Left ventricle myocardium superior (tissue), 1 donor: ENCODE measurements at regions of chr4 and their contacts with region 1.

Region 1: DNA sequence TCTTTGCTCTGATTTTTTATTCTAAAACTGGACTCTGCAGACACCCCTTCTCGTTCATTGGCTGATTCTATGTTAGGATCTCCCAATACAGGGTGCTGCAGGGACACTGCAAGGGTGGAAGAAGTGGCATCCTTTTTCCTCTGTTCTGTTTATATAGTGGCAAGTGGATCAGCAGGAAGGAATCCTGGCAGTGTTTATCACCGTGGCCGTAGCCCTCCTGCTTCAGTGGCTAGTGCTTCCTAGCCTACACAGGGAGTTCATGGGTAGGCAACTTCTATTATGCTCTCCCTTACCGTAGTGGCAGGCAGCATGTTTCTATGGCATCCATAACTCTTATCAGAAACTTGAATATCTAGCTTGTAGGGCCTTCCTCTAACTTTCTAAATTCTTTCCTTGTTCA is 6.4 kb upstream of the AP1AR start:
- DNase-seq: no peak
- ATAC-seq: no peak

Region 2: GRCh38 chr4:112082954-112083586 is 142.1 kb before region 1 on chr4:
- intact Hi-C with region 1: loop called (anchors 5 kb)
- DNase-seq: no peak
- ATAC-seq: no peak